ENCODE measurements at regions of chr16 and their contacts with region 1.

Region 1: GRCh38 chr16:4957720-4958509 is at the start of gene SEC14L5:
- DNase-seq: peak; percentile 98
- ATAC-seq: peak; percentile 97
- total RNA-seq, gene SEC14L5: 0.58 to 2.3 TPM

Region 2: DNA sequence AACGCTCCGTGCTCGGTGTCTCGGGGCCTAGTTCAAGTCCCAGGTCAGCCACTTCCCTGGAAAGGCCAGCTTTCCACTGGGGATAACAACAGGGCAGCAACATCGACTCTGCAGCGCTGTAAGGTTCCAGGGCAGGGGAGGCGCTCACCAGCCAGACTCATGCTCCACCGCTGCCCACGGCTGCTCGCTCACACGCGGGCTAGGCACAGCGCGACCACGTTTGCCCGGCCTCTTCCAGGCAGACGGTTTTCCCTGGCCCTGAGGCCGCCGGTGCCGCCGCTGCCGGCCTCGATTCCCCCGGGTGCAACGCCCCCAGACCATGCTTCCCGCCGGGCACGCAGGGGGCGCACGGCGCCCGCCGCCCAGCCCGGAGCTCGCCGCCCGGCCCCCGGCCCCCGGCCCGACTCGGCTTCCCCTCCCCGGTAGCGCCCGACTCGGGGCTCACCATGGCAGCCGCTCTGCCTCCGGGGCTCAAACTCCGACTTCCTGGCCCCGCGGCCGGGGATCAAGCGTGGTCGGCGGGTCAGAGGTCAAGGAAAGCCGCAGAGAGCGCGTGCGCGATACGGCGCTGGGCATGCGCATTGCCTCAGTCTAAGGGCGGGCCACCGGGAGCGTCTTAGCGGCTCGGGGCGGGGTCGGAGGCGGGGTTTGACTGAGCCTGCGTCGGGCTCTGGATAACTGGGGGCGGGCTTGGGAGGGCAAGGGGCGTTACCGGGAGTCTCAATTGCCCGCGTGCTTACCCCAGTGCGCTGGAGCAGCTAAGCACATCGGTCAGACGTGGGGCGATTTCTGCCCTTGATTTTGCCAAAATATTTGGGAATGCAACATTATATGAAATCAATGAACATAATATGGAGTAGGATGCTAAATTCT is 606.9 kb before region 1 on chr16 and contains the start of gene PAM16:
- intact Hi-C with region 1: loop called in 1 of 2 experiments (anchors 10 kb)
- DNase-seq: peak; percentile 99
- ATAC-seq: peak; percentile 95 to 96
- total RNA-seq, gene PAM16: 51.0 to 64.3 TPM

Region 3: DNA sequence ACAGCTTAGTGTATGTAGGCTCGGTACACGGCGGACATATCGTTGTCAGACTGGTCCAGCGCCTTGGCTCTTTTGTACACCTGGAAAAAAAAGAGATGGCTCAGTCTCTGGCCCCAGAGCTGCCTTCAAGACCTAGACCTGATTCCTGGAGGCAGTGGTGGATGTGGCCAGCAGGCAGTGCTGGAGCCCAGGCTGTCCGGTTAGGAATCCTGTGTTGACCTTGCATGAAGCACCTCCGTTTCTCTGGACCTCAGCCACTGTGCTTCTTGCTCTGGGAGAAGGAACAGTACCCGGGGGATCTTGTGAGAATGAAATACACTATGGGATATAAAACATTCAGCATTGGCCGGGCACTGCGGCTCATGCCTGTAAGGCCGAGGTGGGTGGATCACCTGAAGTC is 152.7 kb before region 1 on chr16:
- intact Hi-C with region 1: loop called in 1 of 2 experiments (anchors 2 kb)
- DNase-seq: peak; percentile 43
- ATAC-seq: no peak

Region 4: GRCh38 chr16:4852207-4852872 is 105.6 kb before region 1 on chr16:
- intact Hi-C with region 1: loop called in 1 of 2 experiments (anchors 10 kb)
- DNase-seq: peak; percentile 55
- ATAC-seq: peak in 1 of 2 donors; percentile 33